Panc1 (cell line): ENCODE measurements at regions of chr17 and their contacts with region 1.

Region 1: GRCh38 chr17:69516225-69516624 is 101.7 kb downstream of the MAP2K6 start:
- DNase-seq: no peak
- ATAC-seq: no peak
- H3K4me3 ChIP-seq: no peak overlapping the region
- H3K27ac ChIP-seq: no peak overlapping the region
- H3K4me1 ChIP-seq: no peaks in the 10 kb centered on the region
- H3K27me3 ChIP-seq: no peaks in the 10 kb centered on the region
- CTCF ChIP-seq: no peak

Region 2: GRCh38 chr17:69327060-69327831 is 189.0 kb before region 1 on chr17 and contains the start of gene ABCA5:
- CTCF ChIA-PET with region 1: no interaction called
- POLR2A ChIA-PET with region 1: no interaction called
- in situ Hi-C with region 1: no loop called
- intact Hi-C with region 1: no loop called
- DNase-seq: peak; percentile 43
- ATAC-seq: peak; percentile 99
- H3K4me3 ChIP-seq: peak within 1 kb of the TSS; percentile 69 to 70
- H3K27ac ChIP-seq: peak within 1 kb of the TSS; percentile 77
- H3K4me1 ChIP-seq: peaks cover 3% of the 10 kb centered on the region; the same call in 1 of the 2 replicates
- H3K27me3 ChIP-seq: no peaks in the 10 kb centered on the region
- CTCF ChIP-seq: no peak
- total RNA-seq, gene ABCA5: 13.3 TPM

Region 3: DNA sequence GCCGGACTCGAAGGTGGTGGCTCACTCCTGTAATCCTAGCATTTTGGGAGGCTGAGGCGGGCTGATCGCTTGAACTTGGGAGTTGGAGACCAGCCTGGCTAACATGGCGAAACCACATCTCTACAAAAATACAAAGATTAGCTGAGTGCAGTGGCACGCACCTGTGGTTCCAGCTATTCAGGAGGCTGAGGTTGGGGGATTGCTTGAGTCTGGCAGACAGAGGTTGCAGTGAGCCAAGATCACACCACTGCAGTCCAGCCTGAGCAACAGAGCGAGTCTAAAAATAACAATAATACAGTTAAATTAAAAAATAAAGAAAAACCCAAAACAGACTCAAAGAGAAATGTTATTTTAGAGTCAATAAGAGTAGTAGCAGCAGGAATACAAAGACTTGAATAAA is 159.6 kb before region 1 on chr17:
- CTCF ChIA-PET with region 1: no interaction called
- POLR2A ChIA-PET with region 1: no interaction called
- in situ Hi-C with region 1: no loop called
- intact Hi-C with region 1: no loop called
- DNase-seq: no peak
- ATAC-seq: no peak
- H3K4me3 ChIP-seq: no peak overlapping the region
- H3K27ac ChIP-seq: no peak overlapping the region
- H3K4me1 ChIP-seq: no peaks in the 10 kb centered on the region
- H3K27me3 ChIP-seq: no peaks in the 10 kb centered on the region
- CTCF ChIP-seq: no peak

Region 4: GRCh38 chr17:69367298-69367697 is 148.9 kb before region 1 on chr17:
- CTCF ChIA-PET with region 1: no interaction called
- POLR2A ChIA-PET with region 1: interaction called, 11 read pairs
- in situ Hi-C with region 1: no loop called
- intact Hi-C with region 1: no loop called
- DNase-seq: no peak
- ATAC-seq: no peak
- H3K4me3 ChIP-seq: no peak overlapping the region
- H3K27ac ChIP-seq: no peak overlapping the region
- H3K4me1 ChIP-seq: no peaks in the 10 kb centered on the region
- H3K27me3 ChIP-seq: no peaks in the 10 kb centered on the region
- CTCF ChIP-seq: no peak

Region 5: DNA sequence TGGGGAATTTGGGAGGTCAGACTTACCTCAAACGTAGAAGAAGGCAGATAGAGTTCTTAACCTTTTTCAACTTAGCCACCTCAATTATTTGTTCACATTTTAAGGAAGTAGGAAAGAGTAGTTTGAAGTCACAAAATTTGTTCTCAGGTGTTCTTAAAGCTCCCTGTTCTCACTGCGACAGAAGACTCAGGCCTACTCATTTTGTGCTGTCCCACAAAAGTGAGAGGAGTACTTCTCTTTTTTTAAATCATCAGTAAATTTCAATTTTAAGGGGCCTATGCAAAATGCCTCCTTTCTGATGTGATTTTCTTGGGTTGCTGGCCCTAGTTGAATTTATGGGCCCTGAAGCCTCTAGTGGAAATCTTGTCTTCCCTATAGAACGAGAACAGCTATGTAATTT is 31.7 kb after region 1 on chr17:
- CTCF ChIA-PET with region 1: no interaction called
- POLR2A ChIA-PET with region 1: no interaction called
- in situ Hi-C with region 1: no loop called
- intact Hi-C with region 1: no loop called
- DNase-seq: no peak
- ATAC-seq: no peak
- H3K4me3 ChIP-seq: no peak overlapping the region
- H3K27ac ChIP-seq: no peak overlapping the region
- H3K4me1 ChIP-seq: no peaks in the 10 kb centered on the region
- H3K27me3 ChIP-seq: no peaks in the 10 kb centered on the region
- CTCF ChIP-seq: no peak